ENCODE measurements at regions of chr17 and their contacts with region 1.

Region 1: GRCh38 chr17:38841141-38841485 is 12.4 kb downstream of the RPL23 start:
- DNase-seq: no peak
- H3K4me3 ChIP-seq: no peak overlapping the region
- H3K27ac ChIP-seq: no peak overlapping the region
- H3K4me1 ChIP-seq: peaks cover 20% of the 10 kb centered on the region
- H3K27me3 ChIP-seq: no peaks in the 10 kb centered on the region
- CTCF ChIP-seq: no peak

Region 2: DNA sequence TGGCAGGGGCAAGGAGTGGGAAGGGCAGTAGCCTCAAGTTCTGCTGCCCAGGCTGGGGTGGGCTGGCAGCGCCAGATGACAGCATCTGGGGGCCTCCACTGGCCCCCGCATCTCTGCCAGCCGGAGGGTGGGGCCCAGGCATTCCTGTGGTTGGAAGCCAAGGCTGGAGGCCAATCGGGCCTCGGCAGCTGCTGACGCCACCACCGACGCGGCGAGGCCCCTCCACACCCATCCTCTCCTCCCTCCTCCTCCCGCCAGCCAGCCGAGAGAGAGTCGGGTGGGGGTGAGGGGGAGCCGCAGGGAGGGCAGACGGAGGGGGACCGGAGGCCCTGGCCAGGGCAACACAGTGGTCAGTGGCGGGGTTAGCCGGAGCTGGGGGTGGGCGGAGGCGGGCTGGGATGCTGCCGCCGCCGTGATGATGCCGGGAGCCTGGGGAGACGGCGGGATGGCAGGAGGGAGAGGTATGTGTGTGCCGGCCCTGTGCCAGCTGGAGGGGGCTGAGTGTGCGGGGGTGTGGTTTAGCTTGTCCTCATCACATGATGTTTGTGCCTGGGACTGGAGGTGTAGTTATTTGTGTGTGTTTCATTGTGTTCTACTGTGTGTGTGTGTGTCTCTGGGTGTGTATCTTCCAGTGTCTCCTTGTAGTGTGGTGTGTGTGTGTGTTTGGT is 376.3 kb before region 1 on chr17:
- CTCF ChIA-PET with region 1: no interaction called
- POLR2A ChIA-PET with region 1: interaction called, 12 read pairs
- intact Hi-C with region 1: no loop called
- DNase-seq: peak in 1 of 2 experiments; percentile 89
- H3K4me3 ChIP-seq: no peak overlapping the region
- H3K27ac ChIP-seq: no peak overlapping the region
- H3K4me1 ChIP-seq: no peaks in the 10 kb centered on the region; the same call in 1 of the 2 replicates
- H3K27me3 ChIP-seq: no peaks in the 10 kb centered on the region
- CTCF ChIP-seq: no peak

Region 3: GRCh38 chr17:38800237-38800760 is 40.8 kb before region 1 on chr17:
- CTCF ChIA-PET with region 1: no interaction called
- POLR2A ChIA-PET with region 1: no interaction called
- intact Hi-C with region 1: no loop called
- DNase-seq: no peak
- H3K4me3 ChIP-seq: peak overlapping the region; percentile 92
- H3K27ac ChIP-seq: peak overlapping the region; percentile 96
- H3K4me1 ChIP-seq: peaks cover 23% of the 10 kb centered on the region
- H3K27me3 ChIP-seq: no peaks in the 10 kb centered on the region
- CTCF ChIP-seq: no peak

Region 4: DNA sequence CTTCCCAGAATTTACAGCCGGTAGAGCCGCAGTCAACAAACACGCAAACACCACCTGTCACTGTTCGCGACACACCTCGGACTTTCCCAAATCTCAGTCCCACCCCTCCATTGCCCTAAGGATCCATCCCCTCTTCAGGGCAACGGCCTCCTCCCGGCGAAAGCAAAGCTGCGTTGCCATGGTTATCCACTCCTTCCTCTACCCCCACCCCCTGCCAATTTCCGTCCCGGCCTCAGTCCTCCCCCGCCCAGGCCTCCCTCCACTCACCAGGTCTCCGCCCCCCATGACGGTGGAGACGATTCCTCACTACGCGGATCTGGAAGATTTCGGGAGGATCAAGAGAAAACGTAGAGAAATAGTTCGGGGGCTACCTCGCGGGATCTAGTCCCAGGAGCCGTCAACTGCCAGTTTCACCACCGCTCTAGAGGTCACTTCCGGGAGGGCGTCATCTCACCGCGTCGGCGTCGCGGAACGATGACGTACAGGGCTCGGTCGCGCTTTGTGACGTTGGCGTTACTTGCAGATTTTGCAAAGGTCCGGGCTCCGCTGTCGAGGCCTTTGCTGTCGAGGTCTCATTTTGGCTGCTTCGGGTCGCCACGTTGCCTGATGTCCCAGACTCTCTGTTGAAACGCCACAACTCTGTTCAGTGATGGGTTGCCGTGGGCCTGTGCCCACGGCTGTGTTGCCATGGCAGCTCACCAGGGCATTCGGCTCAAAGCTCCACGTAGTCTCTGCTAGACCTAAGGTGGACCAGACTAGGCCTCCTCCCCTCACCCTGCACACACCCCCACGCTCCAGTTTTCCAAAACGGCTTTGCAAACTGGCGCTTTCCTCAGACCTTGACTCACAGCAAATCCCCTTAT is 16.0 kb before region 1 on chr17 and contains the start of gene CWC25:
- CTCF ChIA-PET with region 1: no interaction called
- POLR2A ChIA-PET with region 1: interaction called, 12 read pairs
- intact Hi-C with region 1: no loop called
- DNase-seq: peak; percentile 81 to 94
- H3K4me3 ChIP-seq: peak within 1 kb of the TSS; percentile 82
- H3K27ac ChIP-seq: peak within 1 kb of the TSS; percentile 97
- H3K4me1 ChIP-seq: peaks cover 16% of the 10 kb centered on the region
- H3K27me3 ChIP-seq: no peaks in the 10 kb centered on the region
- CTCF ChIP-seq: no peak
- total RNA-seq, gene CWC25: 13.7 and 13.9 TPM in 2 replicates